ENCODE measurements at regions of chr12 and their contacts with region 1.

Region 1: DNA sequence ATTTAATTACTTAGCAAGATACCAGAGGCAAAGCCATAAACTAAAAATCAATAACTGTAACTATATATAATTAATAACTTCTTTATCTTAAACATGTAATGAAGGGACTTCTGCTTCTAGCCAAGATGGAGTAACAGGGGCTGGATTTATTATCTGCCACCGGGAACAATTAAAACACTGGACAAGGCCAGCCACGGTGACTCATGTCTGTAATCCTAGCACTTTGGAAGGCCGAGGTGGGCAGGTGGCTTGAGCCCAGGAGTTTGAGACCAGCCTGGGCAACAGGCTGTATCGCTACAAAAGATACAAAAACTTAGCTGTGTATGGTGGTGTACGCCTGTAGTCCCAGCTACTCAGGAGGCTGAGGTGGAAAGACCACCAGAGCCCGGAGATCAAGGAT is 113.6 kb downstream of the TAOK3 start:
- DNase-seq: no peak
- ATAC-seq: no peak
- H3K4me3 Mint-ChIP-seq: no peak overlapping the region
- H3K27ac Mint-ChIP-seq: no peak overlapping the region
- H3K4me1 Mint-ChIP-seq: peaks cover 4% of the 10 kb centered on the region
- H3K27me3 Mint-ChIP-seq: no peaks in the 10 kb centered on the region
- CTCF ChIP-seq: no peak

Region 2: DNA sequence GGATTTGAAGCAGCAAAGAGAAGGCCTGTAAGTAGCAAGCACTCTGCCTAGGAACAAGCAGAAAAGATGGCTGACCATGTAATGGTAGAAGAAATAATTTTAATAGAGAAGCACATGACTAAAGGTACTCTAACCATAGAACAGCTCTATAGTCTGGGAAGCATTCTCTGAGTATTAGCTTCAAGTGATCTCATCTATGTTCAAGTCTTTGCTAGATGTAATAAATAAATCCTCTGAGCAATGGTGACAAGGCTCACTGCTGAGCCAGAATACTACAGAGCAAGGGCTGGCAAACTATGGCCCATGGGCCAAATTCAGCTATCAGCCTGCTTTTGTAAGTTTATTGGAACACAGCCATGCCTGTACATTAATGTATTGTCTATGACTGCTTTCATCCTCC is 38.4 kb before region 1 on chr12:
- CTCF ChIA-PET with region 1: no interaction called
- POLR2A ChIA-PET with region 1: no interaction called
- intact Hi-C with region 1: loop called (anchors 5 kb)
- DNase-seq: no peak
- ATAC-seq: no peak
- H3K4me3 Mint-ChIP-seq: no peak overlapping the region
- H3K27ac Mint-ChIP-seq: peak overlapping the region; percentile 75
- H3K4me1 Mint-ChIP-seq: peaks cover 23% of the 10 kb centered on the region
- H3K27me3 Mint-ChIP-seq: no peaks in the 10 kb centered on the region
- CTCF ChIP-seq: no peak

Measured in activated B cell treated with CpG ODN at 0.5 μM for 24 hours (primary cell).